ENCODE measurements at regions of chr6 and their contacts with region 1.

Region 1: DNA sequence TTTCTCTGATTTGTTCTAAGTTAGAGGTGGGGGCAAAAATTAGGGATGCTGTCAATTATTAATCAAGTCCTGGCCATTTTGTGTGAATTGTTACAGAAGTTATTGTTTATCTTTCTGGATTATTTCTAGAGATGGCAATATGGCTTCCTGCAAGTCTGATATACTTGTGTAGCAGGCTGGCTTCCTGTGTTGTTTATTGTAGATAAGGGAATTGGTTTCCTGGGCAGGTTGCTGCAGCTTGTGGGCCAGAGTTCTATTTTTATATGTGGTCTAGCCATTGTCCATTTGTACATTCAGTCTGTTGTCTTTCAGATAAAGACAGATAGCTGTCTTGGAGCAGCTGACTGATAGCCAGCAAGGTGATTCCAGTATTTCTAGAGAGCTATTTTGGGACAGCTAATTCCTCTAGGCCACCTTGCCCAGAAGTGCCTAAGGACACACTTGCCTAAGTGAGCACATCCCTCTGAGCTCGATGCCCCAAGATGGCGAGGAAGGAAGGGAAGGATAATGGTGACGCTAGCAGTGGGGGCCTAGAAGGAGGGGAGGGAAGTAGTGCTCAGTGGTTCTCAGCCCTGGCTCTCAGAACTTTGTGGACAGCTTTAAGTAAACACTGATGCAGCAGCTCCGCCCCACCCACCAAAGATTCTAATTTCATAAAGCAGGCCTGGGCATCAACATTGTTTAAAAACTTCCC is 25.5 kb downstream of the DDO start:
- DNase-seq: no peak
- ATAC-seq: peak; percentile 67
- H3K4me3 ChIP-seq: no peak overlapping the region
- H3K4me3 Mint-ChIP-seq: peak overlapping the region in 1 of 10 donors; percentile 32
- H3K27ac ChIP-seq: no peak overlapping the region
- H3K27ac Mint-ChIP-seq: peak overlapping the region in 6 of 9 donors; percentile 7 to 85 (median 54)
- H3K4me1 ChIP-seq: peaks cover 0 to 3% of the 10 kb centered on the region in 2 donors
- H3K4me1 Mint-ChIP-seq: peaks cover 9 to 27% (median 23%) of the 10 kb centered on the region in 7 donors
- H3K27me3 ChIP-seq: no peaks in the 10 kb centered on the region
- H3K27me3 Mint-ChIP-seq: no peaks in the 10 kb centered on the region

Region 2: DNA sequence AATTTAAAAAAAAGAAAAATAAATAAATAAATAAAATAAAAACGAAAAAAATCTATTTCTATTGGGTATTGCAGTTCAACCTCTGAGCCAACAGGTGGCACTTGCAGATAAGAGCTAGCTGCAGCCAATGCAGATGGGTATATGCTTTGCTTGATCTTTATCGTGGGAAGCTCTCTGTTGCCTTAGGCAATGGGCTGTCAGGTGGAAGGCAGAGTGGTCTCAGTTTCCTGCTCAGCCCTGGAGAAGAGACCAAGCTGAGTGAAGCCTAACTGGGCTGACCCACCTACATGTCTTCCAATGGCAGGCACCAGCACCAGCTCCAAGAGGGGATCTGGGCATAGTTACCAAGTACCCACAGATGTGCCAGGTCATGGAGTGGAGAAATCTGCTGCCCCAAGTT is 793.8 kb before region 1 on chr6:
- CTCF ChIA-PET with region 1: interaction called, 4 read pairs
- POLR2A ChIA-PET with region 1: no interaction called
- intact Hi-C with region 1: loop called (anchors 2 to 5 kb)
- DNase-seq: peak in 5 of 9 donors; percentile 26 to 45 (median 35)
- ATAC-seq: peak; percentile 44
- H3K4me3 ChIP-seq: no peak overlapping the region
- H3K4me3 Mint-ChIP-seq: no peak overlapping the region
- H3K27ac ChIP-seq: no peak overlapping the region
- H3K27ac Mint-ChIP-seq: no peak overlapping the region
- H3K4me1 ChIP-seq: no peaks in the 10 kb centered on the region
- H3K4me1 Mint-ChIP-seq: peaks cover 2 to 13% (median 5%) of the 10 kb centered on the region in 7 donors
- H3K27me3 ChIP-seq: no peaks in the 10 kb centered on the region
- H3K27me3 Mint-ChIP-seq: no peaks in the 10 kb centered on the region

Region 3: DNA sequence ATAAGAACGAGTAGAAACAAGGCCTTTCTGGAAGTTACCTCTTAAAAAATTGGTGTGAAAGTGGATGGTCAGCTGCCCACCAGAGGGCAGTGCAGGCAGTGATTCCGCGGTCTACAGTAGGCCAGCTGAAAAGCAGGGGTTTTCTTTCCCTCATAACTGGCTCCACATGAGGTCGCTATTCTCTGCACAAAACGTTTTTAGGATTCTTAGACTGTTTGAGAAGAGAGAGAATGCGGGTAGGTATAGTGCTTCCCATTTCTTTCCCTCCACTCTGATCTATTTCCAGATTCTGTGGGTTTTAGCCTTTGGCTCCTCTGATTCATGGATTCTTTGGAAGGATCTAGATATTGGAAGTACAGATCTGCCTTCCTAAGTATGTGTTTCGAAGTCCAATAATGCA is 684.6 kb before region 1 on chr6:
- CTCF ChIA-PET with region 1: interaction called, 6 read pairs
- POLR2A ChIA-PET with region 1: no interaction called
- intact Hi-C with region 1: loop called (anchors 1 kb)
- DNase-seq: peak; percentile 46 to 74 (median 61)
- ATAC-seq: peak; percentile 99
- H3K4me3 ChIP-seq: no peak overlapping the region
- H3K4me3 Mint-ChIP-seq: no peak overlapping the region
- H3K27ac ChIP-seq: no peak overlapping the region
- H3K27ac Mint-ChIP-seq: no peak overlapping the region
- H3K4me1 ChIP-seq: no peaks in the 10 kb centered on the region
- H3K4me1 Mint-ChIP-seq: peaks cover 7 to 62% (median 38%) of the 10 kb centered on the region in 7 donors
- H3K27me3 ChIP-seq: no peaks in the 10 kb centered on the region
- H3K27me3 Mint-ChIP-seq: no peaks in the 10 kb centered on the region

Region 4: DNA sequence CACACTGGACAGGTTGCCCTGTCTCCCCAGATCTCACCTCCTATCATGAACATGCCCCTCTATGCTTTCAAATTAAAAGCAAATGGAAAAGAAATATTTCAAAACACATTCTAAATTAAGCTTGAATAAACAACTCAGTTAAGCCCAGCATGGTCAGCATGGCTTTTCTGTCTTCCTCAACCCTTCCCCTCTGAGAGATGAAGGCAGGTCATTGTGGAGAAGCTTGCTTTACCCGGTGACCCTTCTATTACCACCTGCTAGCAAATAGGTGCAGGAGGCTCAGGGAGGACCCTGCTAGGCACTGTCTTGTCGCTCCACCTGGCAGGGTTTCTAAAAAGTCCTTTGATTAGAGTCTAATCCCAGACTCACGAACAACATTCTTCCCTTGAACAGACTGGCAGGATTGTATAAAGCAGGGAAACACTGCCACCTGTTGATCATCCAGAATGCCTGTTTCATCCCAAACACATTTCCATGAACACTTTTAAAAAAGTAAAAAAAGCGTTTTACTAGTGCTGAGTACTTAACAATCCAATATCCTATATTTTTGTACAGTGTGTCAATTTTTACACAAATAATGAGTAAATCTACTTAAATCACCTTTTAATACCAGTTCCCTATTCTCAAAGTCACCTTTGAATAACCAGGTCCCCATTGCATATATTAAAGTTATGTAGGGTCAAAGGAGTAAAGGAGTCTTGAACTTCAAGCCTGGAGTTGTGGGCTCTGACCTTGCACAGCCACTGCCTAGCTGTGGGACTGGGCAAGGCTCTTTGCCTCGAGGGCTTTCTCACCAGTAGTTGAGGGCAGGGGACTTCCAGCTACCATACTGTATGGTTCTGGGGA is 336.2 kb before region 1 on chr6:
- CTCF ChIA-PET with region 1: no interaction called
- POLR2A ChIA-PET with region 1: no interaction called
- intact Hi-C with region 1: loop called in 1 of 2 experiments (anchors 1 kb)
- DNase-seq: peak in 4 of 9 donors; percentile 9 to 27 (median 14)
- ATAC-seq: peak; percentile 45
- H3K4me3 ChIP-seq: no peak overlapping the region
- H3K4me3 Mint-ChIP-seq: no peak overlapping the region
- H3K27ac ChIP-seq: no peak overlapping the region
- H3K27ac Mint-ChIP-seq: no peak overlapping the region
- H3K4me1 ChIP-seq: no peaks in the 10 kb centered on the region
- H3K4me1 Mint-ChIP-seq: no peaks in the 10 kb centered on the region
- H3K27me3 ChIP-seq: no peaks in the 10 kb centered on the region
- H3K27me3 Mint-ChIP-seq: peaks cover 0 to 25% (median 16%) of the 10 kb centered on the region in 5 donors

Region 5: GRCh38 chr6:110083875-110084585 is 305.8 kb before region 1 on chr6:
- CTCF ChIA-PET with region 1: no interaction called
- POLR2A ChIA-PET with region 1: no interaction called
- intact Hi-C with region 1: no loop called
- DNase-seq: no peak
- ATAC-seq: no peak
- H3K4me3 ChIP-seq: no peak overlapping the region
- H3K4me3 Mint-ChIP-seq: no peak overlapping the region
- H3K27ac ChIP-seq: no peak overlapping the region
- H3K27ac Mint-ChIP-seq: no peak overlapping the region
- H3K4me1 ChIP-seq: no peaks in the 10 kb centered on the region
- H3K4me1 Mint-ChIP-seq: no peaks in the 10 kb centered on the region
- H3K27me3 ChIP-seq: no peaks in the 10 kb centered on the region
- H3K27me3 Mint-ChIP-seq: peaks cover 3 to 8% (median 8%) of the 10 kb centered on the region in 5 donors